Activated T-helper 1 cell treated with anti-CD3 and anti-CD28 coated beads, Interleukin-12 subunit alpha, Interleukin-12 subunit beta, Interleukin-2, Interleukin-4 antibody, amounts not matched to agents 30 ng/mL and 10 ng/mL and 1 ng/mL, durations not matched to agents 14 hours and 24 hours and 36 hours (primary cell): ENCODE measurements at regions of chr15 and their contacts with region 1.

Region 1: DNA sequence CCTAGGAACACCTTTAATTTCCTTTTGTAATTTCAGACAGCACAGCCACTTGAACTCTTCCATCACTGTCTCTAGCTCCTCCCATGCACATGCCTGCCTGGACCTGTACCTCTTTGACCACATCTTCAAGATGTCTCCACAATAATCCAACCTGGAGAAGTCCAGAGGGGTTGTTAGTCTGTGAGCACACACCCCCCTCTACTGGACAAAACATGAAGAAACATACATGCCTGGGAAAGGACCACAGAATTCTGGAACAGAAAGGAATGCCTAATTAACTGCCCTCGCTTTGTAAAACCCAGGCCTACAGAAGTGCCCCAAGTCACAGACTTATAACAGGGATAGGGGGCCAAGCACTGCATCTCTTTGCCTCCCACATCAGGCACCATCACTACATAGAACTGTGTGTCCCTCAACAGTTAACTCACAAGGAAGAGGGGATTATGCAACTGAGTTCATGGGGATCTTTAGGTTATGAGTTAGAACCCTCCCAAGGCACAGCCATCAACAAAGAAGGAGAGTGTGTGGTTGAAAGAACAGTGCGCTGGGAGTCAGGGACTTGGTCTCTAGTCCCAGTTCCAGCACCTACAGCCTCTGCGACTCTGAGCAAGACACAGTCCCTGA is 61.7 kb downstream of the FMN1 start:
- DNase-seq: no peak
- H3K4me3 Mint-ChIP-seq: no peak overlapping the region
- H3K27ac Mint-ChIP-seq: no peak overlapping the region
- H3K4me1 Mint-ChIP-seq: no peaks in the 10 kb centered on the region
- H3K27me3 Mint-ChIP-seq: peaks cover 4% of the 10 kb centered on the region

Region 2: DNA sequence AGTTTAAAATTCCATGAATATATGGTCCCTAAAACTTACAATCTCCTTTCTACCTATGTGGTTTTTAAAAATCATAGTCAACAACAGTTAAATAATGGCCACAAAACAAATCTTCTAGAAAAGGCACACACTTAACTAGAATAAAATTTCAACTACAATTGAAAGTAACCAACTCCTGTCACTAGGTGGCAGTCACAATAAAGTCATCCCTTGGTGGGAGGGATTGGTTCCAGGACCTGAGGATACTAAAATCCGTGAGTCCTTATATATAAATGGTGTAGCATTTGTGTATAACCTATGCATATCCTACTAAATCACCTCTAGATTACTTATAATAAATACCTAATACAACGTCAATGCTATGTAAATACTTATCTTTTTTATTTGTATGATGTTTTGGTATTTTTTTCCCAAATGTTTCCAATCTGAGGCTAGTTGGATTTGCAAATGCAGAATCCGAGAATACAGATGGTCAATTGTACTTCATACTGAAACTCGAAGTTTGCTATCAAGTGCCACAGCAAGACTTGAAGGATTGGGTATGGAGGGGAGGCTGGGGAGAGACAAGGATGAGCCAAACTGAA is 110.9 kb before region 1 on chr15:
- intact Hi-C with region 1: loop called (anchors 2 kb)
- DNase-seq: no peak
- H3K4me3 Mint-ChIP-seq: no peak overlapping the region
- H3K27ac Mint-ChIP-seq: no peak overlapping the region
- H3K4me1 Mint-ChIP-seq: no peaks in the 10 kb centered on the region
- H3K27me3 Mint-ChIP-seq: no peaks in the 10 kb centered on the region